ENCODE measurements at regions of chr20 and their contacts with region 1.

Region 1: GRCh38 chr20:57089691-57090150 is 176.7 kb downstream of the BMP7 start:
- DNase-seq: peak; percentile 92
- H3K4me3 ChIP-seq: peak overlapping the region in 1 of 2 experiments; percentile 37; a peak in 1 of 4 replicates
- H3K27ac ChIP-seq: no peak overlapping the region
- H3K4me1 ChIP-seq: peaks cover 0 to 7% of the 10 kb centered on the region in 2 experiments; a peak in 1 of 4 replicates
- H3K27me3 ChIP-seq: no peaks in the 10 kb centered on the region
- CTCF ChIP-seq: peak; percentile 78
- EP300 ChIP-seq: no peak
- RAD21 ChIP-seq: peak; percentile 91

Region 2: DNA sequence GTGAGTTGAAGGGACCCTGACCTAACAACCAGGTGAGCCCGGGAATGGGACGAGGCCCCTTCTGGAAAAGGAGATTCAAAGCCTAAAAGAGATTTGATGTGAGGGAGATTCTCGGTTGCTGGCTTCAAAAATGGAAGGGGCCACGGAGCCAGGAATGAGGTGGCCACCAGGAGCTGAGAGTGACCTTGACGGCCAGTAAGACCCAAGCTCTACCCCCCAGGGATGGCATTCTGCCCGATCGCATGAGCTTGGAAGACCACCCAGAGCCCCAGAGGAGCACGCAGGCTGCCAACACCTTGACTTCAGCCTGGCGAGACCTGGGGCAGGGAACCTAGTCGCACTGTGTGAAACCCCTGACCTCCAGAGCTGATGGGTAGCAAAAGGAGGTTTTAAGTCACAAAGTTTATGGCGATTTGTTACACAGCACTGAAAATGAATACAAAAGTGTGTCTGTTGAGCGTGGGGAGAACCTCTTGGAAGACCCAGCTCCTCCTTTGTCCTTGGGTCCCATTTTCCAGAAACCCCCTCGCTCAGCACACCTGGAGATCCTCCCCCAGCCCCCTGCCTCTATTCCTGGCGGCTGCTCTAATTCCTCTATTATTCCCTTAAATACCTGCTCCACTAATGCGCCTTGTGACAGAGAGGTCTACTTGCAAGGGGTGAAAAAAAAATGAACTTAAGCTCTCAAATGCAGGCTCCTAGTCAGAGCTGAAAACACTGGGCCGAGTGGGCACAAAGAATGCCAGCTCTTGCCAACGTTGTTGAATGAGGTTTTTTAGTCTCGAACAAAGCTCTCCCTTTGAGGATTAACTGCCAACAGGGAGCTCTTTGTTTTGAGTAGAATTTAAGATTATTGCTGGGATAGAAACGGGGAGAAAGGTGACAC is 13.1 kb after region 1 on chr20:
- CTCF ChIA-PET with region 1: interaction called, 18 read pairs
- POLR2A ChIA-PET with region 1: no interaction called
- DNase-seq: no peak
- H3K4me3 ChIP-seq: no peak overlapping the region
- H3K27ac ChIP-seq: no peak overlapping the region
- H3K4me1 ChIP-seq: peaks cover 0 to 5% of the 10 kb centered on the region in 2 experiments; a peak in 1 of 4 replicates
- H3K27me3 ChIP-seq: no peaks in the 10 kb centered on the region
- CTCF ChIP-seq: no peak
- EP300 ChIP-seq: no peak
- RAD21 ChIP-seq: no peak

Region 3: DNA sequence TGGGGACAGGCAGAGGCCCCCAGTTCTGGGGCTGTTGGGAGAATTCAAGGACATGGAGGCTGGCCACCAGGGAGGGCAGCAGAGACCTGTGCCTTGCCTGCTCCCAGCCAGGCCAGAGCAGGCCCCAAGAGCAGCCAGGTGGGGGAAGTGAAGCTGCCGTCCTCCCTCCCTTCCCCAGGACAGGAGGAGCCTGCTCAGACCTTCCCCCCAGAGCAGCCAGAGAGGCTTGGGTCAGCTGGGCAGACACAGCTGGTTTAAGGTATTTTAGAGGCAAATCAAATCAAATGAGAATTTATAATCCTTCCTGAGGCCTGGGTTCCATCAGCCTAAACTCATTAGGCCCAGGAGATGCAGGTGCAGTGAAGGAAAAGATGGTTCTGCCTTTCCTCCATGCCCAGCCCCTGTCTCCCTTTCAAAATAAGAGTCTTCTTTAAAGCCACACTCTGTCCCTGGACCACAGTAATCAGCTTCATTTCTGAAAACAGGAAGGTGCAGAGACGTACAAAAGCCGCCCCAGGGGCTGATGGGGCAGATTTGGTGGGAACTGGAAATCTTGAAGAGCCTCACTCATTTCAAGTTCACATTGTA is 155.0 kb after region 1 on chr20:
- CTCF ChIA-PET with region 1: interaction called, 31 read pairs
- POLR2A ChIA-PET with region 1: no interaction called
- DNase-seq: peak; percentile 73
- H3K4me3 ChIP-seq: no peak overlapping the region
- H3K27ac ChIP-seq: peak overlapping the region in 1 of 2 experiments; percentile 78; a peak in 2 of 4 replicates
- H3K4me1 ChIP-seq: peaks cover 0 to 38% of the 10 kb centered on the region in 2 experiments; a peak in 1 of 4 replicates
- H3K27me3 ChIP-seq: no peaks in the 10 kb centered on the region
- CTCF ChIP-seq: no peak
- EP300 ChIP-seq: peak in 1 of 2 experiments; percentile 98; a peak in 2 of 4 replicates
- RAD21 ChIP-seq: peak; percentile 60

Region 4: GRCh38 chr20:57323034-57323433 is 233.3 kb after region 1 on chr20:
- CTCF ChIA-PET with region 1: interaction called, 128 read pairs
- POLR2A ChIA-PET with region 1: no interaction called
- DNase-seq: no peak
- H3K4me3 ChIP-seq: no peak overlapping the region
- H3K27ac ChIP-seq: no peak overlapping the region
- H3K4me1 ChIP-seq: peaks cover 0 to 6% of the 10 kb centered on the region in 2 experiments; a peak in 1 of 4 replicates
- H3K27me3 ChIP-seq: 0 out of 2 replicates have a peak, but pooled peaks cover 3% of the 10 kb centered on the region
- CTCF ChIP-seq: no peak
- EP300 ChIP-seq: no peak
- RAD21 ChIP-seq: no peak

Region 5: DNA sequence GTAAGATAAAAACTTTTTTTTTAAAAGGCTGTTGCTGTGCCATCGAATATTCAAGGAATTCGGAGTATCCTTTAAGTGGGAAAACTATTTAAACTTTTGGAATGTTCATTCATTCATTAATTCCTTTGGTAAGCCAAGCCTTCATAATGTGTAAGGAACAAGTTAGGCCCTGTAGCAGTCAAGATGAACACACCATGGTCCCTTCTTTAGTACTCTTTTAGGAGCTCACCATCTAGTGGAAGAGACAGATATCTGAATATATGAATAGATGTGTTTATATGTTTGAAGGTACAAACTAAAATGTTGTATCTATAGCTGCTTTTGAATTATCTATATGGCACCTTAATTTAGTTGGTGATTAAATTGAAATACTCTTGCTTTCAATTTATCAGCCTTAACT is 245.7 kb after region 1 on chr20:
- CTCF ChIA-PET with region 1: interaction called, 187 read pairs
- POLR2A ChIA-PET with region 1: no interaction called
- DNase-seq: no peak
- H3K4me3 ChIP-seq: no peak overlapping the region
- H3K27ac ChIP-seq: no peak overlapping the region
- H3K4me1 ChIP-seq: no peaks in the 10 kb centered on the region
- H3K27me3 ChIP-seq: peaks cover 10% of the 10 kb centered on the region; the same call in 1 of the 2 replicates
- CTCF ChIP-seq: no peak
- EP300 ChIP-seq: no peak
- RAD21 ChIP-seq: peak; percentile 67